HepG2 (cell line): ENCODE measurements at regions of chr5 and their contacts with region 1.

Region 1: GRCh38 chr5:13976867-13977830 is 32.7 kb upstream of the DNAH5 start:
- DNase-seq: peak; percentile 15
- ATAC-seq: peak; percentile 91
- H3K4me3 ChIP-seq: no peak overlapping the region
- H3K27ac ChIP-seq: no peak overlapping the region
- H3K4me1 ChIP-seq: no peaks in the 10 kb centered on the region
- H3K27me3 ChIP-seq: peaks cover 0 to 2% of the 10 kb centered on the region in 2 experiments; a peak in 1 of 5 replicates
- CTCF ChIP-seq: peak; percentile 57
- EP300 ChIP-seq: no peak
- POLR2A ChIP-seq: no peak
- RAD21 ChIP-seq: no peak

Region 2: GRCh38 chr5:13944560-13945199 is 32.5 kb before region 1 on chr5 and contains the start of gene DNAH5:
- CTCF ChIA-PET with region 1: no interaction called
- POLR2A ChIA-PET with region 1: no interaction called
- in situ Hi-C with region 1: no loop called
- intact Hi-C with region 1: no loop called
- DNase-seq: no peak
- ATAC-seq: no peak
- H3K4me3 ChIP-seq: no peak within 1 kb of the TSS
- H3K27ac ChIP-seq: no peak within 1 kb of the TSS
- H3K4me1 ChIP-seq: no peaks in the 10 kb centered on the region
- H3K27me3 ChIP-seq: peaks cover 0 to 1% of the 10 kb centered on the region in 2 experiments; a peak in 1 of 5 replicates
- CTCF ChIP-seq: no peak
- EP300 ChIP-seq: no peak
- POLR2A ChIP-seq: no peak
- RAD21 ChIP-seq: no peak
- total RNA-seq, gene DNAH5: 0.03 and 0.09 TPM in 2 replicates

Region 3: DNA sequence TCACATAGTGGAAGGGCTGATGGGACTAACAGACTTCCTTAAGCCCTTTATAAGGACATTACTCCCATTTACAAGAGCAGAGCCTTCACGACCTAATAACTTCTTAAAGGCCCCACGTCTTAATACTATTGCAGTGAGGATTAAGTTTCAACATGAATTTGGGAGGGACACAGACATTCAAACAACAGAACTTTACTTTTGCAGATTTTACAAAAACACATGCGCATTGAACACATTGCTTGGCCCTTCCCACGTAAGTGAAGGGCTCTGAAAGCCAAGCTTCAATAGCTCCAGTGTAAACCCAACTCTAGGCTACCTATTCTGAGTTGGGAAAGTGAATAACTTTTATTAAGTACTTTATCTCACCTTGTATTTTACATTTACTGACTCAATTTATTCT is 21.1 kb after region 1 on chr5:
- CTCF ChIA-PET with region 1: no interaction called
- POLR2A ChIA-PET with region 1: no interaction called
- in situ Hi-C with region 1: no loop called
- intact Hi-C with region 1: loop called (anchors 2 kb)
- DNase-seq: no peak
- ATAC-seq: no peak
- H3K4me3 ChIP-seq: no peak overlapping the region
- H3K27ac ChIP-seq: no peak overlapping the region
- H3K4me1 ChIP-seq: no peaks in the 10 kb centered on the region
- H3K27me3 ChIP-seq: peaks cover 0 to 4% of the 10 kb centered on the region in 2 experiments; a peak in 2 of 5 replicates
- CTCF ChIP-seq: no peak
- EP300 ChIP-seq: no peak
- POLR2A ChIP-seq: no peak
- RAD21 ChIP-seq: no peak